ENCODE measurements at regions of chr5 and their contacts with region 1.

Region 1: DNA sequence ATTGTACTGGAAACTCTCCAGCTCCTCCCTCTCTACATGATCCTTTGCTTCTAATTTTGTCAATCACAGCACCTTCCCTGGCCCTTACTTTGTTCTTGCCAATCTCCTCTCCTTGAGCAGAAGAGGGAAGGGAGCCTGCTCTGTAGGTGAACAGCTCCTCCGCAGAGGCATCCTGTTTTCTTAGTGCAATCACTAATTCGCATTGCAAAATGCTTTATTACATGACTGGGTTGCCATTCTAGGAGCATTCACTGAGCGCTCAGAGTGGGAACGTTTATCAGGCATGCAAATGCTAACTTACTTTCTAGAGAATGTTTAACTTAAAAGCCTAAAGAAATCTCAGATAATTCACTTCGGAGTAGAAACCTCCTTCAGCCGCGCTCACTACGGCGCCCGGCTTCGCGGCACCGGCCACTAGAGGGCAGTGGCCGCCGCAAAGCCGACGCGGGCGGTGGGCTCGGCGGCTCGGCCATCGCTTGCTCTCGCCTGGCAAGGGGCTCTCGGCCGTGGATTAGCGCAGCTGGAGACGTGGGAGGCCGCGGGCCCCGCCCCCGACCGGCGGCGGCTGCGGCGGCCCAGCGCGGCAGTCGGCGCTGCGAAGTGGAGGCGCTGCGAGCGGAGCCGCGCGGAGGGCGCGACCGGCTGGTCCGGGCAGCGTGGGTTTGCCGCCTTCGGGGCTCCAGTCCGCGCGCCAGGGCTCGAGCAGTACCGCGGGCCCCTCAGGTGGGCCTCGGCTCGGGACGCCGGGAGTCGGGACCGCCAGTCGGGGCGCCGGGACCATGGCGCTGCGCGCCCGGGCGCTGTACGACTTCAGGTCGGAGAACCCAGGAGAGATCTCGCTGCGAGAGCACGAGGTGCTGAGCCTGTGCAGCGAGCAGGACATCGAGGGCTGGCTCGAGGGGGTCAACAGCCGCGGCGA is at the start of gene SNX18:
- DNase-seq: peak; percentile 95
- H3K4me3 ChIP-seq: peak within 1 kb of the TSS; percentile 83
- H3K27ac ChIP-seq: no peak within 1 kb of the TSS
- H3K4me1 ChIP-seq: peaks cover 43% of the 10 kb centered on the region
- CTCF ChIP-seq: peak; percentile 85
- total RNA-seq, gene SNX18: 9.9 and 14.6 TPM in 2 replicates

Region 2: GRCh38 chr5:54646356-54647101 is 129.1 kb after region 1 on chr5:
- CTCF ChIA-PET with region 1: no interaction called
- POLR2A ChIA-PET with region 1: interaction called, 3 read pairs
- intact Hi-C with region 1: loop called (anchors 1 kb)
- DNase-seq: peak; percentile 91
- H3K4me3 ChIP-seq: peak overlapping the region; percentile 62
- H3K27ac ChIP-seq: peak overlapping the region; percentile 98
- H3K4me1 ChIP-seq: peaks cover 37% of the 10 kb centered on the region
- CTCF ChIP-seq: no peak

Region 3: DNA sequence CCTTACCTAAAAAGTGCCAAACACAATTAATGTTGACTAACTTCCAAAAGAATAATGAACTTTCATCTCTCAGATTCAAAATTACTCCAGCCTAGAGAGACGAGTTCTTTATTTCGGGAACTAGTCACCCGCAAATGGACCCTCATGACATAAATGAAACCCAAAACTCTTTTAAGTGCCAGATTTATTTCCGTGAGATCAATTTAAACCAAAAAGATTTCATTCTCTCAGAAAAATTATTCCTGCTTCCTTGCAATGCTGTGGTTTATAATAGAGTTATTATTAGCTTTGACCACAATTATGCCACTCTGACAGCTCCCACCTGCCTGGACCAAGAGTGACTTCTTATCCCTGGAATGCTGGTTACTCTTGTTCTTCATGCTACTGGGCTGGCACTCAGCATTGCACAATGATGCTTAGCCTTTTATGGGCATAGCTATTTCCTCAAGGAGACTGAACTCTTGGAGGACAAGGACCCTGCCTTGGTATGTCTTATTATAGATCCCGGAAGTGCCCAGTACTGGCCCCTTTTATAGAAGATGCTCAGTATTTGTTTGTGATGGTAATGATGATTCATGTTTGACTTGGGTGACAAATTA is 183.7 kb after region 1 on chr5:
- CTCF ChIA-PET with region 1: no interaction called
- POLR2A ChIA-PET with region 1: interaction called, 3 read pairs
- intact Hi-C with region 1: loop called (anchors 2 kb)
- DNase-seq: no peak
- H3K4me3 ChIP-seq: no peak overlapping the region
- H3K27ac ChIP-seq: no peak overlapping the region
- H3K4me1 ChIP-seq: peaks cover 4% of the 10 kb centered on the region
- CTCF ChIP-seq: no peak

Region 4: GRCh38 chr5:54764102-54765090 is 247.0 kb after region 1 on chr5:
- CTCF ChIA-PET with region 1: no interaction called
- POLR2A ChIA-PET with region 1: no interaction called
- intact Hi-C with region 1: loop called (anchors 5 kb)
- DNase-seq: no peak
- H3K4me3 ChIP-seq: no peak overlapping the region
- H3K27ac ChIP-seq: no peak overlapping the region
- H3K4me1 ChIP-seq: no peaks in the 10 kb centered on the region
- CTCF ChIP-seq: no peak

Region 5: GRCh38 chr5:54844905-54845566 is 327.6 kb after region 1 on chr5:
- CTCF ChIA-PET with region 1: interaction called, 9 read pairs
- POLR2A ChIA-PET with region 1: interaction called, 4 read pairs
- intact Hi-C with region 1: loop called (anchors 1 kb)
- DNase-seq: peak; percentile 70
- H3K4me3 ChIP-seq: peak overlapping the region; percentile 13
- H3K27ac ChIP-seq: no peak overlapping the region
- H3K4me1 ChIP-seq: no peaks in the 10 kb centered on the region
- CTCF ChIP-seq: peak; percentile 89

Region 6: DNA sequence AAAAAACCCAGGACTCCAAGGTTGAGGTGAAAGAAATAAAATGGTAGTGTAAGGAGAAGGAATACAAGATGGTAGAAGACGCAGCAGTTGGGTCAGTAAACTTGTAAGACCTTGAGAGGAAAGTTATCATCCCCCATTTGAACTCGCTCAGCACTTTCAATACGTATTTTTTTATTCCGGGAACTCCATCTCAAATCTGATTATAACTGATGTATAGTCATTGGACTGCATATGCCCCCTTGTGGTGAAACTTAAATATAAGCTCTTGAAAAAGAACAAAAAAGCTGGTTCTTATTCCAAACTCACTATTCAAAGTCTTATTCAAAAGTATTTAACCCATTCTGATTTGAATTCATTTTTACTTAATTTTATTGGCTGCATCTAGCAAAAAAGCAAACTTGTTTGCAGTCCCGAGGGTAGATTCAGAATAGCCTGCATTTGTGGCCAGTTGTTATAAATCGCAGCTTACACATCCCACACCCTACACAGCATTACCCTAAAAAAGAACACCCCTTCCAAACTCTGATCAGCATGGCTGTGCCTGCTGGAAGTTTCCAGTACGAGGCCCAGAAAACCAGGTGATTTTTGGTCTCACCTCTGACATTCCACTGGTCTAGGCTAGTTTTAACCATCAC is 350.0 kb after region 1 on chr5:
- CTCF ChIA-PET with region 1: interaction called, 5 read pairs
- POLR2A ChIA-PET with region 1: no interaction called
- intact Hi-C with region 1: loop called (anchors 1 kb)
- DNase-seq: peak; percentile 69
- H3K4me3 ChIP-seq: no peak overlapping the region
- H3K27ac ChIP-seq: no peak overlapping the region
- H3K4me1 ChIP-seq: no peaks in the 10 kb centered on the region
- CTCF ChIP-seq: peak; percentile 89

Region 7: GRCh38 chr5:55146543-55147151 is 629.2 kb after region 1 on chr5:
- CTCF ChIA-PET with region 1: no interaction called
- POLR2A ChIA-PET with region 1: no interaction called
- intact Hi-C with region 1: loop called (anchors 10 kb)
- DNase-seq: peak; percentile 71
- H3K4me3 ChIP-seq: no peak overlapping the region
- H3K27ac ChIP-seq: no peak overlapping the region
- H3K4me1 ChIP-seq: no peaks in the 10 kb centered on the region
- CTCF ChIP-seq: peak; percentile 97

Measured in OCI-LY7 (cell line).